GM12878 (cell line): ENCODE measurements at regions of chr7 and their contacts with region 1.

Region 1: GRCh38 chr7:152675759-152676636 is at the start of gene XRCC2:
- DNase-seq: peak; percentile 77
- ATAC-seq: peak; percentile 96
- H3K4me3 ChIP-seq: peak within 1 kb of the TSS; percentile 96
- H3K27ac ChIP-seq: peak within 1 kb of the TSS; percentile 83
- H3K4me1 ChIP-seq: no peaks in the 10 kb centered on the region
- H3K27me3 ChIP-seq: no peaks in the 10 kb centered on the region
- CTCF ChIP-seq: no peak
- EP300 ChIP-seq: peak in 1 of 2 experiments; percentile 47; a peak in 1 of 4 replicates
- POLR2A ChIP-seq: peak; percentile 88
- RAD21 ChIP-seq: no peak
- polyA plus RNA-seq, gene XRCC2: 4.8 to 6.3 TPM

Region 2: GRCh38 chr7:152463709-152464311 is 212.2 kb before region 1 on chr7:
- CTCF ChIA-PET with region 1: no interaction called
- POLR2A ChIA-PET with region 1: no interaction called
- RAD21 ChIA-PET with region 1: no interaction called
- SMC1A ChIA-PET with region 1: interaction called, 4 read pairs
- in situ Hi-C with region 1: no loop called
- intact Hi-C with region 1: loop called (anchors 5 kb)
- DNase-seq: peak; percentile 95
- ATAC-seq: peak; percentile 93
- H3K4me3 ChIP-seq: peak overlapping the region; percentile 89
- H3K27ac ChIP-seq: peak overlapping the region; percentile 96
- H3K4me1 ChIP-seq: no peaks in the 10 kb centered on the region; the same call in 1 of the 2 replicates
- H3K27me3 ChIP-seq: no peaks in the 10 kb centered on the region
- CTCF ChIP-seq: no peak
- EP300 ChIP-seq: peak; percentile 20 to 72; a peak in 2 of 4 replicates
- POLR2A ChIP-seq: peak; percentile 90; the same call in 1 of the 2 replicates
- RAD21 ChIP-seq: no peak

Region 3: GRCh38 chr7:152850420-152850819 is 174.4 kb after region 1 on chr7:
- CTCF ChIA-PET with region 1: no interaction called
- POLR2A ChIA-PET with region 1: no interaction called
- RAD21 ChIA-PET with region 1: no interaction called
- SMC1A ChIA-PET with region 1: no interaction called
- in situ Hi-C with region 1: no loop called
- intact Hi-C with region 1: no loop called
- DNase-seq: no peak
- ATAC-seq: no peak
- H3K4me3 ChIP-seq: no peak overlapping the region
- H3K27ac ChIP-seq: no peak overlapping the region
- H3K4me1 ChIP-seq: no peaks in the 10 kb centered on the region
- H3K27me3 ChIP-seq: no peaks in the 10 kb centered on the region
- CTCF ChIP-seq: no peak
- EP300 ChIP-seq: no peak
- POLR2A ChIP-seq: no peak
- RAD21 ChIP-seq: no peak

Region 4: GRCh38 chr7:152894273-152895170 is 218.5 kb after region 1 on chr7:
- CTCF ChIA-PET with region 1: no interaction called
- POLR2A ChIA-PET with region 1: no interaction called
- RAD21 ChIA-PET with region 1: no interaction called
- SMC1A ChIA-PET with region 1: no interaction called
- in situ Hi-C with region 1: no loop called
- intact Hi-C with region 1: no loop called
- DNase-seq: no peak
- ATAC-seq: peak; percentile 96
- H3K4me3 ChIP-seq: no peak overlapping the region
- H3K27ac ChIP-seq: no peak overlapping the region
- H3K4me1 ChIP-seq: no peaks in the 10 kb centered on the region
- H3K27me3 ChIP-seq: no peaks in the 10 kb centered on the region; a peak in 1 of 4 replicates
- CTCF ChIP-seq: peak; percentile 66 to 70 (median 68)
- EP300 ChIP-seq: no peak
- POLR2A ChIP-seq: no peak
- RAD21 ChIP-seq: peak; percentile 64